ENCODE measurements at regions of chr1 and their contacts with region 1.

Region 1: GRCh38 chr1:201703621-201704439 is 125.1 kb upstream of the IPO9 start:
- DNase-seq: peak; percentile 92
- ATAC-seq: peak; percentile 98
- H3K4me3 ChIP-seq: no peak overlapping the region
- H3K27ac ChIP-seq: no peak overlapping the region
- H3K4me1 ChIP-seq: peaks cover 6% of the 10 kb centered on the region
- H3K27me3 ChIP-seq: no peaks in the 10 kb centered on the region
- CTCF ChIP-seq: peak; percentile 98

Region 2: DNA sequence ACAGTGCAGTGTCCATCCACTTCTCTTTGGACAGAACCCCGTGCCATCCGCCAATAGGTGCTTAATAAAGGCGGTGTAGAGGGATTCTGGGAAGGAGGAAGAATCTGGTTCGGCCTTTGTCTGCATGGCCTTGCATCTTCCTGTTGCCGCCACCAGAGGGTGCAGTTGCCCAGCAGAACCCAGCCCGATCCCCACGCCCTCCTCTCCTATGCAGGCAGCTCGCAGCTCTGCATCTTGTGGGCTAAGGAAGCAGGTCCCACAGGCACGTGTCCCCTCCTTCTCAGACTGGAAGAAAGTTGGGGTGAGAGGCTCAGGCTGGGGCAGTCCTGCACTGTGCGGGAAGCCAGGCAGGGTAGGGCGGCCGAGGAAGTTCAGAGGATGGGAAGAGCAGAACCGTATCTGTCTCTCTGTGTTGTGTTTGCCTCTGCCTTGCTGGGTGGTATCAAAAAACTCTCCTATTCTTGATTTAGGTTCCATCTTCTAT is 144.1 kb before region 1 on chr1:
- intact Hi-C with region 1: loop called (anchors 2 kb)
- DNase-seq: peak; percentile 87
- ATAC-seq: peak; percentile 97
- H3K4me3 ChIP-seq: no peak overlapping the region
- H3K27ac ChIP-seq: no peak overlapping the region
- H3K4me1 ChIP-seq: peaks cover 17% of the 10 kb centered on the region
- H3K27me3 ChIP-seq: no peaks in the 10 kb centered on the region
- CTCF ChIP-seq: peak; percentile 94

Region 3: DNA sequence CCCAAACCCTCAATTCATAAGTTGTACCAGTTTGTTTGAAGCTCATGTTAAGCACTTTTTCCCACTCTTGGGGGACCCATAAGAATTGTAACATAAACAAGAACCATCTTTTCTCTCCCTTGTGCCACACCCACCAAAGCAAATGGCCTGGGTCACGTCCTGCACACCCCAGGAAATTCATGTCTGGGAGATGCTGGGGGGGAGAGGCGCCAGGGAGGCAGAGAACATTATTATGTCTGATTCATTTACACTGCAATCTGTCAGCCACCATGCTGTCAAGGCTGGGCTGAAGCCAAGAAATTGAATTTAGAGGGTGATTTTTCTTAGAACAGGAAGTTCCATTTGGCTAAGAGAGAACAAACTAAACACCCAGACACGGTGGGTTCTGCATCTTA is 87.9 kb after region 1 on chr1:
- intact Hi-C with region 1: no loop called
- DNase-seq: no peak
- ATAC-seq: peak; percentile 29
- H3K4me3 ChIP-seq: no peak overlapping the region
- H3K27ac ChIP-seq: peak overlapping the region; percentile 64
- H3K4me1 ChIP-seq: peaks cover 44% of the 10 kb centered on the region
- H3K27me3 ChIP-seq: no peaks in the 10 kb centered on the region
- CTCF ChIP-seq: no peak

Region 4: DNA sequence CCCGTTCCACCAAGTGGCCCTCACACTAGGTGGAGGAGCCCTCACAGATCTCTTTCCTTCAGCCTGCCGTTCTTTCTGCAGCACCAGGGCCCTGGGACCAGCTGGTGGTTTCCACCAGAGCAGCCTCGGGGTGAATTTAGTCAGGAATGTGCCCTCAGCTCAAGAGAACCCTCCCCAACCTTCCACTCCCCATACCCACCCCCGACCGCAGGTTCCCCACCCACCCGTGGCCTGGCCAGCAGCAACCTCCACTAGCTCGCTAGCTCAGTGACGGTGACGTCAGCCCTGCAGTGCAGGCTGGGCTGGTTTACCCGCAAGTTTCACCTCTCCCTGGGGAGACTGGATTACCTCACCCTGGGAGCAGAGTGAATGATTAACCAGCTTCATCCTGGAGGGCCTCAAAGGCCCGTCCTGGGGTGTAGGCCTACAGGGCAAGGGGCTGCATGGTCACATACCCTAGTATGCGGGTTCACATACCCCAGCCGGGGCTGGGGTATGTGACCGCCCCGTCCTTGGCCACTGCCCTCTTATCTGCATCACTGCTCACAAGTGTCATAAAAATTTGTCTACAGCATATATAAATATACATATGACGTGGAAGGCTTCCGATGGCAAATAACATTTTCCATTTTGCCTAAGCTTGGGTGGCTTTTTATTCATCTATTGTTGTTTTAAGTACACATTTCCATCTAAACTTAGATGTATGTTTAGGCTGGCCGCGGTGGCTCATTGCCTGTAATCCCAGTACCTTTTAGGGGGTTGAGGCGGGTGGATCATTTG is 331.0 kb after region 1 on chr1:
- intact Hi-C with region 1: no loop called
- DNase-seq: peak; percentile 94
- ATAC-seq: peak; percentile 98
- H3K4me3 ChIP-seq: no peak overlapping the region
- H3K27ac ChIP-seq: peak overlapping the region; percentile 79
- H3K4me1 ChIP-seq: peaks cover 11% of the 10 kb centered on the region
- H3K27me3 ChIP-seq: no peaks in the 10 kb centered on the region
- CTCF ChIP-seq: no peak